Activated CD8-positive, alpha-beta T cell treated with anti-CD3 and anti-CD28 coated beads, Interleukin-2, amount 10 ng/mL, durations not matched to agents 7 days and 5 days (primary cell): ENCODE measurements at regions of chr9 and their contacts with region 1.

Region 1: DNA sequence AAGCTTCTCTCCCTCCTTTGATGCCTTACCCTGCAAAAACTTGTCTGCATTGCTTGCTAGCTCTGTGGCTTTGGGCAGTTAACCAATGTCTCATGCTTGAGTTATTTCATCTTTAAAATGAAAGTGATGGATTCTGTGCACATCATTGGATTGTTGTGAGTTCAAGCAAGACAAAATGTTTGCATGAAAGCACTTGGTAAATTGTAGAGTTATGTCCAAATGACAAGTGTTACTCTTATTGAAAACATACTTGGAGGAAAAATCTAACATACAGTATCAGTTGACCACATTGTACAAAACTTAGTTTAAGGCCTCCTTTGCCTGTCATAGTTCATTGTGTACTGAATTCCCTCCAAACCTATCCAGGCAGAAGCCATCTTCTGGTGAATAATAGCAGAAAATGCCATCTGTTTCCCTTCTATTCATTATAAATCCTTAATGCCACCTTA is 30.0 kb downstream of the TGFBR1 start:
- DNase-seq: peak; percentile 63
- ATAC-seq: peak; percentile 59
- H3K4me3 Mint-ChIP-seq: peak overlapping the region; percentile 36
- H3K27ac Mint-ChIP-seq: peak overlapping the region; percentile 79
- H3K4me1 Mint-ChIP-seq: peaks cover 80% of the 10 kb centered on the region
- H3K27me3 Mint-ChIP-seq: no peaks in the 10 kb centered on the region

Region 2: DNA sequence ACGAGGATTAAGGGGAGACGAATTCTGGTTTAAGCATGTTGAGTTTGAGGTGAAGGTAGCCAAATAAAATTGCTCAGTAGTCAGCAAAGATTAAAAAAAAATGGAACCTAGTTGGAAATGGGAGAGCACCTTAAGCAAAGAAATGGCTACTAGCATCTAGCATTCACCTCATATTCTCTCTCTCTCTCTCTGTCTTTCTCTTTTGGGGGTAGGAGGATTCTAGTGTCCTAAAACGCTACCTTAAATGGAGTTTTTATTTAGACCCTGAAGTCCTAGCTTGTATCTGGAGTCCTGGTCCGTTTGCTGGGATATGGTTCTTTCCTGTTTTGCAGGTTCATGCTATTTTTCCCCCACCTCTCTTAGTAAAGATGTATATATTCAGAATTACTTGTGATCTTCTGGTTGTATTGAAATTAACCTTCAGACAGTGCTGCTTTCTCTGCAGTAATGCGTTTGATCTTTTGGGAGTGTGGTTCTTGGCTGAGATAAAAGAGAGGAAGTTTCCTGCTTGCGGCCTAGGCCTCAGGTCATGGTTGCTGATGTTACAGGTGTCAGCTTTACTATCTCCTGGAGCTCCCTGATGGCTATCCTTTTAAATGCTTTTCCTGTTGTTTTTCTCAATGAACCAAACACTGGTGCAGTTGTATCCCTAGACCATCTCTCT is 22.0 kb before region 1 on chr9:
- CTCF ChIA-PET with region 1: interaction called, 125 read pairs
- POLR2A ChIA-PET with region 1: interaction called, 4 read pairs
- DNase-seq: peak; percentile 78
- ATAC-seq: peak; percentile 98
- H3K4me3 Mint-ChIP-seq: peak overlapping the region; percentile 61
- H3K27ac Mint-ChIP-seq: peak overlapping the region; percentile 86
- H3K4me1 Mint-ChIP-seq: peaks cover 91% of the 10 kb centered on the region
- H3K27me3 Mint-ChIP-seq: no peaks in the 10 kb centered on the region

Region 3: DNA sequence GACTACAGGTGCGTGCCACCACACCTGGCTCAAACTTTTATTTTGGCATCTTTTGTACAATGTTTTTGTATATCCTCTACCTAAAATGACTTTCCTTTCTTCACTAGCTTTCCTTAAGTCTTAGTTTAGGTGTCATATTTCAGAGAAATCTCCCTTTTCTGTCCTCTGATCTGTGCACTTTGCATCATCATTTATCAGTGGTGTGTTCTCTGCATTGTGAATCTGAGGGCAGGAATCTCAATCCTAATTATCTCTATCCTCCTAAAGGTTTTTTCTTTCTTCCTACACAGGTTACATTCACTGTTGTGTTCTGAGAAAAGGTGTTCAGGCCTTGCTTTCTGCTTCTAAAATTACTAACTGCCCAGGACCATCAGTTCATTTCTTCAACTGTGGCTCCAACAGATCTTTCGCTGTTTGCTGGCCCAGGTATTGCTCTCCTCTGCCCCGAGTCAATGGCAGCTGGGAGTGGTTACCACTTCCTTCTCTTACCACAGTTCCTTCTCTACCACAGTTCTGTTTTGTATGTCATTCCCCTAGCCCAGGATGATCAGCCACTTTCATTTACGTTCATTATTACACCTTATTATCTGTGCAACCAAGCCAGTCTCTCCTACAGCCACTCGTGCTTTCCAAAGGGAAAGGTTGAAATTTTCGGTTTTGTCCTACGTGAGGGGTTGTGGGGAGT is 16.0 kb before region 1 on chr9:
- CTCF ChIA-PET with region 1: interaction called, 30 read pairs
- POLR2A ChIA-PET with region 1: interaction called, 3 read pairs
- DNase-seq: peak; percentile 80
- ATAC-seq: peak; percentile 99
- H3K4me3 Mint-ChIP-seq: peak overlapping the region; percentile 72
- H3K27ac Mint-ChIP-seq: peak overlapping the region; percentile 93
- H3K4me1 Mint-ChIP-seq: peaks cover 87% of the 10 kb centered on the region
- H3K27me3 Mint-ChIP-seq: no peaks in the 10 kb centered on the region

Region 4: GRCh38 chr9:99158629-99159028 is 23.7 kb after region 1 on chr9:
- CTCF ChIA-PET with region 1: no interaction called
- POLR2A ChIA-PET with region 1: no interaction called
- DNase-seq: no peak
- ATAC-seq: no peak
- H3K4me3 Mint-ChIP-seq: no peak overlapping the region
- H3K27ac Mint-ChIP-seq: no peak overlapping the region
- H3K4me1 Mint-ChIP-seq: peaks cover 15% of the 10 kb centered on the region
- H3K27me3 Mint-ChIP-seq: peaks cover 18% of the 10 kb centered on the region

Region 5: DNA sequence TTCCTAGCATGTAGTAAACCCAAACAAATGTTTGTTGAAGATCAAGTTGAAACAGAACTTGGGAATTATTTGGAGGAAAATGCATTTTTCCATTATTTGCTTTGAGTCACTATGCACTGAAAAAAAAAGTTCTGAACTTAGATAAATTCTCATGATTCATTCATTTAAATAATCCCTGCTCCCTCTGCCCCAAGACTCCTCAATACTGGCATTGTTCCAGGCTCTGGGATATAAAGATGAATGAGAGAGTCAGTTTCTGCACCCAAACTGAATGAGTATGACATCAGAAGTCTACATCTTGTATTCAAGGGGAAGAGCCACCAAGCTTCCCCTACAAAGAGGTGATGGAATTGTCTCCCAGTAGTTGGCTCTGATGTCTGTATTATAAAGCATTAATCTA is 211.0 kb after region 1 on chr9:
- CTCF ChIA-PET with region 1: no interaction called
- POLR2A ChIA-PET with region 1: no interaction called
- DNase-seq: no peak
- ATAC-seq: no peak
- H3K4me3 Mint-ChIP-seq: no peak overlapping the region
- H3K27ac Mint-ChIP-seq: no peak overlapping the region
- H3K4me1 Mint-ChIP-seq: no peaks in the 10 kb centered on the region
- H3K27me3 Mint-ChIP-seq: peaks cover 22% of the 10 kb centered on the region